ENCODE measurements at regions of chr6 and their contacts with region 1.

Region 1: GRCh38 chr6:167832497-167833395 is 6.0 kb downstream of the AFDN start:
- DNase-seq: no peak
- H3K4me3 Mint-ChIP-seq: peak overlapping the region; percentile 73
- H3K27ac Mint-ChIP-seq: peak overlapping the region; percentile 95
- H3K4me1 Mint-ChIP-seq: peaks cover 38% of the 10 kb centered on the region
- H3K27me3 Mint-ChIP-seq: no peaks in the 10 kb centered on the region
- CTCF ChIP-seq: no peak

Region 2: DNA sequence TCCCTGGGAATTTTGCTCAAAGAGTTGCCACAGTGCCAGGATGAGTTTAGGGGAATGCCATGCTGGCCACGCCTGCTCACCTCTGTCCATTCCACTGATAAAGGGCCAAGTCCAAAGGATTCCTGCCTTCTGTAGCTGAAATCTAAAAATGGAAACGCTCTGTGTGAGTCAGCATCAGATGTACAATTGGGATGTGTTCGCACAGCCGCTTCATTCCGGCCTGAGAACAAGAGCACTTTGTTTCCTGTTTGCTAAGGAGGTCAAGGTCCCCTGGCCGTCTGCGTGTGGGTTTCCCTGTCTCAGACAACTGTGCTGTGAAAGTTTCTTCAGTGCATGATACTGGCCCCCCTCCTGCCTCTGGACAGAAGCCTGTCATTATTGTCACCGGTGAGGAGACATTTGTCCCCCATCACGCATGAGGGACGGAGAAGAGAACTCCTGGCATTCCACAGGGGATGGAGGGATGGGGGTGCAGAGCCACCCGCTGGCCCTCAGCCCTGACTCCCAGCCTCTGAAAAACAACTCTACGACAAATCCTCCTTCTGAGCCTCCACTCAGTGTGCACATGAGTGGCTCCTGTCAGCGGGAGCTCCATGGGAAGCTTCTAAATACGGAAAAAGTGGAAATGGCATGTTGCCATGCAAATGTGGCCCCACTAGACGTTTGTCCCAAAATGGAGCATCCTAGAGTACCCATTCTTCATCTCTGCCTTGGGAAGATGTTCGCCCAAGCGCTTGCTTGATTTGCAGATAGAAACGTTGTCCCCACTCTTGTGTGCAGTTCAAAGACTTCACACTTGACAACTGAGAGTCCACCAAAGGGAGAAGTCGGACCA is 149.5 kb before region 1 on chr6:
- CTCF ChIA-PET with region 1: no interaction called
- intact Hi-C with region 1: loop called (anchors 5 kb)
- DNase-seq: peak; percentile 82
- H3K4me3 Mint-ChIP-seq: no peak overlapping the region
- H3K27ac Mint-ChIP-seq: peak overlapping the region; percentile 89
- H3K4me1 Mint-ChIP-seq: peaks cover 57% of the 10 kb centered on the region
- H3K27me3 Mint-ChIP-seq: no peaks in the 10 kb centered on the region
- CTCF ChIP-seq: no peak

Region 3: GRCh38 chr6:167849846-167850459 is 17.2 kb after region 1 on chr6:
- CTCF ChIA-PET with region 1: interaction called, 5 read pairs
- intact Hi-C with region 1: loop called (anchors 2 kb)
- DNase-seq: peak; percentile 57
- H3K4me3 Mint-ChIP-seq: peak overlapping the region; percentile 52
- H3K27ac Mint-ChIP-seq: peak overlapping the region; percentile 81
- H3K4me1 Mint-ChIP-seq: peaks cover 73% of the 10 kb centered on the region
- H3K27me3 Mint-ChIP-seq: no peaks in the 10 kb centered on the region
- CTCF ChIP-seq: no peak

Region 4: GRCh38 chr6:167858086-167858591 is 25.4 kb after region 1 on chr6:
- CTCF ChIA-PET with region 1: interaction called, 3 read pairs
- intact Hi-C with region 1: loop called (anchors 2 kb)
- DNase-seq: no peak
- H3K4me3 Mint-ChIP-seq: peak overlapping the region; percentile 63
- H3K27ac Mint-ChIP-seq: peak overlapping the region; percentile 81
- H3K4me1 Mint-ChIP-seq: peaks cover 66% of the 10 kb centered on the region
- H3K27me3 Mint-ChIP-seq: no peaks in the 10 kb centered on the region
- CTCF ChIP-seq: no peak

Region 5: DNA sequence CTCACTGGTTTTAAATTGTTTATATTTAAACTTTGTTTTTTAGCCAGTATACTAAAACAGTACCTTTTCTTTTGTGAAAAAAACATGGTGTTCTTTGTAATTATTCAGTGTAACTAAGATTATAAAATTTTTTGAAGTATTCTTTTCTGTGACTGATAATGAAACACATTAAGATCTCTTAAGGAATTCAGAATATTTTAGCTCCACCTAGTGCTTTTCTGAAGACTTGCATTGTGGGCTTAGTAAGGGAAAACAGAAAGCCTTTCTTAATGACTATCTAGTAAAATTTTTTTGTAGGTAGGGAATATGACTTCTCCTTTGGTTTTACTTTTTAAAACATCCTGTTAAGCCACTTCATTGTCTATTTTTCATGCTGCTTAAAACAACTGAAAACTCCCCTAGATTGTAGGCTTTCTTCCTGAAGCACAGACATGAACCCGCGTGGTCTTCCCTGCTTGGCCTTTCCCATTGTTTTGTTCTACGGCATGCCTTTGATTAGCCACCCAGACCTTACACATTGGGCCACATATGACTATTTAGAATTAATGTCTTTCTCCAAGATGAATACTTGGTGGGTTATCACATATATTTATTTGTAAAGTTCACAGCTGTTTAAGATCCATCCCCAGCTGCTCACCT is 66.0 kb after region 1 on chr6:
- CTCF ChIA-PET with region 1: no interaction called
- intact Hi-C with region 1: loop called (anchors 5 kb)
- DNase-seq: no peak
- H3K4me3 Mint-ChIP-seq: no peak overlapping the region
- H3K27ac Mint-ChIP-seq: no peak overlapping the region
- H3K4me1 Mint-ChIP-seq: peaks cover 5% of the 10 kb centered on the region
- H3K27me3 Mint-ChIP-seq: no peaks in the 10 kb centered on the region
- CTCF ChIP-seq: peak; percentile 45

Measured in Calu3 (cell line).